ENCODE measurements at regions of chr1 and their contacts with region 1.

Region 1: GRCh38 chr1:92858564-92859399 is 26.9 kb downstream of the RPL5 start:
- DNase-seq: no peak
- ATAC-seq: peak; percentile 78 to 91 (median 88)
- H3K4me3 ChIP-seq: peak overlapping the region; percentile 54
- H3K27ac ChIP-seq: peak overlapping the region; percentile 74
- H3K4me1 ChIP-seq: peaks cover 10% of the 10 kb centered on the region
- H3K27me3 ChIP-seq: no peaks in the 10 kb centered on the region
- CTCF ChIP-seq: peak; percentile 98

Region 2: GRCh38 chr1:92519043-92519442 is 339.7 kb before region 1 on chr1:
- intact Hi-C with region 1: no loop called
- DNase-seq: no peak
- ATAC-seq: no peak
- H3K4me3 ChIP-seq: no peak overlapping the region
- H3K27ac ChIP-seq: no peak overlapping the region
- H3K4me1 ChIP-seq: no peaks in the 10 kb centered on the region
- H3K27me3 ChIP-seq: no peaks in the 10 kb centered on the region
- CTCF ChIP-seq: no peak

Region 3: DNA sequence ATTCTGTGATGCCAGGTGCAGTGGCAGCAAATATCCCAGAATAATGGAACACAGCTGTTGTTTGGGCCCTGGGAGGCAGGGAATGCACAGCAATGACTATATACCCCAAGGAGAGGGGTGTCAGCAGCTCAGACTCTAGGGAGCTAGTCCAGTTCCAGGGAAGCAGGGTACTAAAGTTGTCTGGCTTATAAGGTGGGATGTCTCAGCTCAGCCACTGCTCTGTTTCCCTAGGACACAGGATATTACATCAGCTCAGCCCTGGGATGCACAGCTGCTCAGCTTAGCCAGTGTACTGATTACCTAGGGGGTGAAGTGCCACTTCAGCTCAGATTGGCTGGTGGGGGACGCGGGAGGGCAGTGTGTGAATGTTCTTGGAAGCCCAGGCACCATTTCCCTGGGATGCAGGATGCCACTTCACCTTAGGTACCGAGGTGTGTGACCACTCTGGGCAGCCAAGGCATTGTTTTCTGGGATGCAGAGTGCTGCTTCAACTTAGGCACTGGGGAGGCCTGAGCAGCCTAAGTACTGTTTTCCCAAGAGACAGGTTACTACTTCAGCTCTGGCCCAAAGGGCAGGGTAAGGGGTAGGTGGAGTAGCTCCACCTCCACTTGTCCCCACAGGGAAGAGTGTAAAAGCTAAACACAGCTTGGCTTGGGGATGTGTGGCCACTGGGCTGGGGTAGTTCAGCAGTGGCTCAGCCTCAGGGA is 43.1 kb after region 1 on chr1:
- intact Hi-C with region 1: no loop called
- DNase-seq: no peak
- ATAC-seq: no peak
- H3K4me3 ChIP-seq: no peak overlapping the region
- H3K27ac ChIP-seq: no peak overlapping the region
- H3K4me1 ChIP-seq: no peaks in the 10 kb centered on the region
- H3K27me3 ChIP-seq: no peaks in the 10 kb centered on the region
- CTCF ChIP-seq: no peak

Region 4: DNA sequence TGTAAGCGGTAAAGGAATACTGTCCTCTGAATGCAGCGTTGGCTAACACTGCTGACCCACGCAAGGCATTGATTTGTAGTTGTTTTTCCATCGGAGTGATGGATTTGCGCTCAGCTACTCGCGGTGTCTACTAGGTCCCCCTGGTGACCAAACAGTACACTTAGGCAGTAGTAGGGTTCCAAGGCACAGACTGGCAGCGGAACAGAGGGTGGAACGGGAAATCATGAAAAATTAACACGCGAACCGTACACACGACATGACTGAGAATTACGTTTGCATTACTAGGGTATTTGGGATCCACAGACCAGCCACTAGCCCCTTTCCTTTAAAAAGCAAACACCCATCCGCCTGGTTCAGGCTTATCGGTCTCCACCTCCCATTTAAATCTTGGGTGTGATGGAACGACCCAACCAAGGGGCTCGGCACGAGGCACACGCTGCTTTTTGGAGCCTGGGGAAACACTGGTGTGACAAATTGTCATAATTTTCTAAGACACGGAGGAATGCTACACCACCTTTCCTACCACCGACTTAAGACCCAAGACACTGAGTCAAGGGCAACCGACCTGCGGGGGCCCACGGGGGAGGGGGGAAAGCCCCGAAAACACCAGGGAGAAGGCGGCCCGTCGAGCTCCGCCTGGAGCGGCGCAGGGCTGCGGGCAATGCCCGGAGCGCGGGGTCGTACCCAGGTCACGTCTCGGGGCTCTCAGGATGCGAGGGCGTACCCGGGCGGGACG is 101.8 kb after region 1 on chr1:
- intact Hi-C with region 1: loop called (anchors 1 to 5 kb)
- DNase-seq: peak; percentile 43 to 64
- ATAC-seq: peak; percentile 78 to 85 (median 80)
- H3K4me3 ChIP-seq: peak overlapping the region; percentile 85
- H3K27ac ChIP-seq: peak overlapping the region; percentile 91
- H3K4me1 ChIP-seq: peaks cover 30% of the 10 kb centered on the region
- H3K27me3 ChIP-seq: no peaks in the 10 kb centered on the region
- CTCF ChIP-seq: peak; percentile 65

Region 5: DNA sequence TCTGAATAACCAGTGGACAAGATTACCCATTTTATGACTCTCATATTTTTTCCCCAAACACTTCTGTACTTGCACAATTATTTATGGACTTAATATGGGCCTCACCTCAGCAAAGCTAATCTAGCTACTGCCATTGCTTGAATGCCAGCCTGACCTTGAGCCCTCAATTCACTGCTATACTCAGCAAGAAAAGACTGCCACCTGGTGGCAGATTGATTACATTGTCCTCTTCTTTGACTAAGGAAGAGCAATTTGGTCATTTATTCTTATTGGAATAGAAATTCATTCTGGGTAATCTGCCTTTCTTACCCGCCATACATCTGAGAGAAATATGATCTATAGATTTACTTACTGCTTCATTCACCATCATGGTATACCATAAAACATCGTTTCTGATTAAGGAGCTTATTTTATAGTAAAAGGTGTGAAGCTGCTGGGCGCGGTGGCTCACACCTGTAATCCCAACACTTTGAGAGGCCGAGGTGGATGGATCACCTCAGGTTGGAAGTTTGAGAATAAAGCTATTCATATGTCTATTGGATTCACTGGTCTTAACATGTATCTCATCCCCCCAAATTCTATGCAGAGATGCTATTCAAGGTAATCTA is 135.4 kb after region 1 on chr1:
- intact Hi-C with region 1: loop called (anchors 1 kb)
- DNase-seq: no peak
- ATAC-seq: peak; percentile 90 to 97 (median 92)
- H3K4me3 ChIP-seq: no peak overlapping the region
- H3K27ac ChIP-seq: no peak overlapping the region
- H3K4me1 ChIP-seq: peaks cover 4% of the 10 kb centered on the region
- H3K27me3 ChIP-seq: no peaks in the 10 kb centered on the region
- CTCF ChIP-seq: peak; percentile 92

Region 6: GRCh38 chr1:93061895-93062792 is 203.4 kb after region 1 on chr1:
- intact Hi-C with region 1: loop called in 1 of 2 experiments (anchors 10 kb)
- DNase-seq: no peak
- ATAC-seq: peak; percentile 49 to 70 (median 61)
- H3K4me3 ChIP-seq: no peak overlapping the region
- H3K27ac ChIP-seq: no peak overlapping the region
- H3K4me1 ChIP-seq: no peaks in the 10 kb centered on the region
- H3K27me3 ChIP-seq: no peaks in the 10 kb centered on the region
- CTCF ChIP-seq: peak; percentile 36

Region 7: DNA sequence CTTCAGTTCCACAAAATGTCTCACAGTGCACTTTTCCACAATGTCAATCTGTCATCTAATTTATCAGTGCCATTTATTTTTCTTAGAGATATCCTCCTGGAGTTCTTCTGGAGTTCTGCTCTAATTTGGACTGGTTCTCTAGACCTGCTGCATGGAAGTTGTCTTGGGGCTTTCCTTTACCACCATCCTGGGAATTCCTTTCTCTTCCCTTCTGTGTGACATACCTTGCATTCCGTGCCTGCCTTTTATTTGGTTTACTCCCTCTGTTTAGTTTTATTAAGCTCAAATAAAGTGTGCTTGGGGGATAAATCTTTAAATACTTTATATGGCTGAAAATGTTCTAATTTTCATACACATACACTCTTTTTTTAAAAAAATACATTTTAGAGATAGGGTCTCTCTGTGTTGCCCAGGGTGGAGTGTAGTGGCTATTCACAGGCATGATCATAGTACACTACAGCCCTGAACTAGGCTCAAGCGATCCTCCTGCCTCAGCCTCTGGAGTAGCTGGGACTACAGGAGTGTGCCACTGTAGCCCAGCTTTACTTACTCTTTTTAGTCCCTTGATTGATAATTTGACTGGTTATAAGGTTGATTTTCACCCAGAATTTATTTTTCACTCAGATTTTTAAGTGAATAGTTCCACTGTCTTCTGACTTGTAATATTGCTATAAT is 234.7 kb after region 1 on chr1:
- intact Hi-C with region 1: no loop called
- DNase-seq: no peak
- ATAC-seq: no peak
- H3K4me3 ChIP-seq: no peak overlapping the region
- H3K27ac ChIP-seq: no peak overlapping the region
- H3K4me1 ChIP-seq: no peaks in the 10 kb centered on the region
- H3K27me3 ChIP-seq: no peaks in the 10 kb centered on the region
- CTCF ChIP-seq: no peak